ENCODE measurements at regions of chr13 and their contacts with region 1.

Region 1: GRCh38 chr13:102596147-102597028 is at the start of gene TPP2:
- DNase-seq: peak; percentile 97 to 98 (median 97)
- H3K4me3 ChIP-seq: peak within 1 kb of the TSS; percentile 78 to 96
- H3K4me3 Mint-ChIP-seq: peak within 1 kb of the TSS; percentile 97 to 99 (median 98)
- H3K27ac ChIP-seq: peak within 1 kb of the TSS; percentile 93
- H3K27ac Mint-ChIP-seq: peak within 1 kb of the TSS; percentile 99 to 100 (median 100)
- H3K4me1 ChIP-seq: peaks cover 65% of the 10 kb centered on the region
- H3K4me1 Mint-ChIP-seq: peaks cover 53 to 83% (median 64%) of the 10 kb centered on the region in 4 donors
- H3K27me3 ChIP-seq: no peaks in the 10 kb centered on the region
- H3K27me3 Mint-ChIP-seq: no peaks in the 10 kb centered on the region
- total RNA-seq, gene TPP2: 117 TPM

Region 2: GRCh38 chr13:102394158-102395053 is 202.0 kb before region 1 on chr13:
- CTCF ChIA-PET with region 1: no interaction called
- POLR2A ChIA-PET with region 1: interaction called, 11 read pairs
- intact Hi-C with region 1: loop called (anchors 2 kb)
- DNase-seq: peak; percentile 93 to 95 (median 94)
- H3K4me3 ChIP-seq: peak overlapping the region; percentile 61 to 93
- H3K4me3 Mint-ChIP-seq: peak overlapping the region; percentile 88 to 94 (median 90)
- H3K27ac ChIP-seq: peak overlapping the region; percentile 59
- H3K27ac Mint-ChIP-seq: peak overlapping the region; percentile 86 to 95 (median 92)
- H3K4me1 ChIP-seq: peaks cover 12% of the 10 kb centered on the region
- H3K4me1 Mint-ChIP-seq: peaks cover 7 to 19% (median 13%) of the 10 kb centered on the region in 4 donors
- H3K27me3 ChIP-seq: peaks cover 9% of the 10 kb centered on the region
- H3K27me3 Mint-ChIP-seq: peaks cover 7% of the 10 kb centered on the region in 2 donors

Region 3: DNA sequence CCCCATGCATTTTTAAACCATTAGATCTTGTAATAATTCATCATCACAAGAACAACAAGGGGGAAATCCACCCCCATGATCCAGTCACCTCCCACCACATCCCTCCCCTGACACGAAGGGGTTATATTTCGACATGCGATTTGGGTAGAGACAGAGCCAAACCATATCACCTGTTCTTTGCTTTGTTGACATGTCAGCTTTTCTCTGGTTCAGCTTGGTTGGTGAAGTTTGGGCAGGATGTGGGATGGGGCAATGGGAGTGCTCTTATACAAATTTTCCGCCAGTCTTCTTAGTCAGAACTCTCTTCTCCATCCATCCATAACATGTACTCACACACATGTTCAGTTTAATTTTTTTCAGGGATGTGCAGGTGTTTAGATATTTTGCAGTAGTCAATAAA is 13.3 kb after region 1 on chr13:
- CTCF ChIA-PET with region 1: interaction called, 30 read pairs
- POLR2A ChIA-PET with region 1: interaction called, 49 read pairs
- intact Hi-C with region 1: loop called (anchors 2 kb)
- DNase-seq: no peak
- H3K4me3 ChIP-seq: no peak overlapping the region
- H3K4me3 Mint-ChIP-seq: peak overlapping the region in 1 of 8 donors; percentile 61
- H3K27ac ChIP-seq: no peak overlapping the region
- H3K27ac Mint-ChIP-seq: peak overlapping the region in 3 of 7 donors; percentile 15 to 80 (median 69)
- H3K4me1 ChIP-seq: peaks cover 28% of the 10 kb centered on the region
- H3K4me1 Mint-ChIP-seq: peaks cover 33 to 57% (median 44%) of the 10 kb centered on the region in 4 donors
- H3K27me3 ChIP-seq: no peaks in the 10 kb centered on the region
- H3K27me3 Mint-ChIP-seq: no peaks in the 10 kb centered on the region

Region 4: GRCh38 chr13:102626928-102627327 is 30.5 kb after region 1 on chr13:
- CTCF ChIA-PET with region 1: interaction called, 10 read pairs
- POLR2A ChIA-PET with region 1: interaction called, 6 read pairs
- intact Hi-C with region 1: loop called (anchors 5 kb)
- DNase-seq: no peak
- H3K4me3 ChIP-seq: no peak overlapping the region
- H3K4me3 Mint-ChIP-seq: no peak overlapping the region
- H3K27ac ChIP-seq: no peak overlapping the region
- H3K27ac Mint-ChIP-seq: no peak overlapping the region
- H3K4me1 ChIP-seq: no peaks in the 10 kb centered on the region
- H3K4me1 Mint-ChIP-seq: peaks cover 0 to 6% (median under 1%) of the 10 kb centered on the region in 4 donors
- H3K27me3 ChIP-seq: no peaks in the 10 kb centered on the region
- H3K27me3 Mint-ChIP-seq: no peaks in the 10 kb centered on the region

Region 5: GRCh38 chr13:102650444-102650843 is 54.1 kb after region 1 on chr13:
- CTCF ChIA-PET with region 1: interaction called, 10 read pairs
- POLR2A ChIA-PET with region 1: interaction called, 8 read pairs
- intact Hi-C with region 1: no loop called
- DNase-seq: no peak
- H3K4me3 ChIP-seq: no peak overlapping the region
- H3K4me3 Mint-ChIP-seq: no peak overlapping the region
- H3K27ac ChIP-seq: no peak overlapping the region
- H3K27ac Mint-ChIP-seq: peak overlapping the region in 1 of 7 donors; percentile 42
- H3K4me1 ChIP-seq: no peaks in the 10 kb centered on the region
- H3K4me1 Mint-ChIP-seq: peaks cover 0 to 2% (median under 1%) of the 10 kb centered on the region in 4 donors
- H3K27me3 ChIP-seq: no peaks in the 10 kb centered on the region
- H3K27me3 Mint-ChIP-seq: no peaks in the 10 kb centered on the region

Region 6: GRCh38 chr13:102773441-102774215 is 177.2 kb after region 1 on chr13 and contains the start of gene TEX30:
- CTCF ChIA-PET with region 1: interaction called, 8 read pairs
- POLR2A ChIA-PET with region 1: interaction called, 40 read pairs
- intact Hi-C with region 1: loop called (anchors 1 kb)
- DNase-seq: peak; percentile 85 to 93 (median 90)
- H3K4me3 ChIP-seq: peak within 1 kb of the TSS; percentile 50 to 81
- H3K4me3 Mint-ChIP-seq: peak within 1 kb of the TSS; percentile 90 to 94 (median 92)
- H3K27ac ChIP-seq: peak within 1 kb of the TSS; percentile 84
- H3K27ac Mint-ChIP-seq: peak within 1 kb of the TSS; percentile 88 to 97 (median 96)
- H3K4me1 ChIP-seq: peaks cover 23% of the 10 kb centered on the region
- H3K4me1 Mint-ChIP-seq: peaks cover 15 to 57% (median 42%) of the 10 kb centered on the region in 4 donors
- H3K27me3 ChIP-seq: no peaks in the 10 kb centered on the region
- H3K27me3 Mint-ChIP-seq: no peaks in the 10 kb centered on the region
- total RNA-seq, gene TEX30: 9.2 to 9.3 TPM

Region 7: GRCh38 chr13:102845630-102846260 is 249.4 kb after region 1 on chr13 and contains the start of gene ERCC5:
- CTCF ChIA-PET with region 1: interaction called, 122 read pairs
- POLR2A ChIA-PET with region 1: interaction called, 444 read pairs
- intact Hi-C with region 1: loop called (anchors 1 kb)
- DNase-seq: peak; percentile 95 to 98 (median 97)
- H3K4me3 ChIP-seq: peak within 1 kb of the TSS; percentile 88 to 92
- H3K4me3 Mint-ChIP-seq: peak within 1 kb of the TSS; percentile 97 to 99 (median 98)
- H3K27ac ChIP-seq: peak within 1 kb of the TSS; percentile 96
- H3K27ac Mint-ChIP-seq: peak within 1 kb of the TSS; percentile 98 to 100 (median 99)
- H3K4me1 ChIP-seq: peaks cover 46% of the 10 kb centered on the region
- H3K4me1 Mint-ChIP-seq: peaks cover 27 to 55% (median 37%) of the 10 kb centered on the region in 4 donors
- H3K27me3 ChIP-seq: no peaks in the 10 kb centered on the region
- H3K27me3 Mint-ChIP-seq: no peaks in the 10 kb centered on the region
- total RNA-seq, gene ERCC5: 134 to 136 TPM